ENCODE measurements at regions of chr7 and their contacts with region 1.

Region 1: GRCh38 chr7:108181073-108181985 is 51.2 kb upstream of the LAMB4 start:
- DNase-seq: no peak
- H3K4me3 ChIP-seq: no peak overlapping the region
- H3K27ac ChIP-seq: no peak overlapping the region
- H3K27me3 ChIP-seq: no peaks in the 10 kb centered on the region
- CTCF ChIP-seq: peak; percentile 67 to 93 (median 82)

Region 2: GRCh38 chr7:108497082-108497725 is 315.9 kb after region 1 on chr7:
- intact Hi-C with region 1: loop called in 1 of 2 experiments (anchors 2 kb)
- DNase-seq: peak in 2 of 10 donors; percentile 25 to 58
- H3K4me3 ChIP-seq: no peak overlapping the region
- H3K27ac ChIP-seq: peak overlapping the region in 1 of 59 donors; percentile 16
- H3K27me3 ChIP-seq: no peaks in the 10 kb centered on the region
- CTCF ChIP-seq: peak; percentile 72 to 93 (median 85)

Measured in dorsolateral prefrontal cortex (tissue), 120 donors.